Caco-2 (cell line): ENCODE measurements at regions of chr7 and their contacts with region 1.

Region 1: GRCh38 chr7:46352004-46352954 is 431.2 kb upstream of the IGFBP3 start:
- DNase-seq: peak; percentile 48 to 56
- H3K4me3 ChIP-seq: no peak overlapping the region
- H3K4me3 Mint-ChIP-seq: no peak overlapping the region
- H3K27ac Mint-ChIP-seq: no peak overlapping the region
- H3K4me1 ChIP-seq: no peaks in the 10 kb centered on the region
- H3K4me1 Mint-ChIP-seq: no peaks in the 10 kb centered on the region
- H3K27me3 ChIP-seq: no peaks in the 10 kb centered on the region
- H3K27me3 Mint-ChIP-seq: peaks cover 6% of the 10 kb centered on the region
- CTCF ChIP-seq: peak; percentile 68 to 73

Region 2: DNA sequence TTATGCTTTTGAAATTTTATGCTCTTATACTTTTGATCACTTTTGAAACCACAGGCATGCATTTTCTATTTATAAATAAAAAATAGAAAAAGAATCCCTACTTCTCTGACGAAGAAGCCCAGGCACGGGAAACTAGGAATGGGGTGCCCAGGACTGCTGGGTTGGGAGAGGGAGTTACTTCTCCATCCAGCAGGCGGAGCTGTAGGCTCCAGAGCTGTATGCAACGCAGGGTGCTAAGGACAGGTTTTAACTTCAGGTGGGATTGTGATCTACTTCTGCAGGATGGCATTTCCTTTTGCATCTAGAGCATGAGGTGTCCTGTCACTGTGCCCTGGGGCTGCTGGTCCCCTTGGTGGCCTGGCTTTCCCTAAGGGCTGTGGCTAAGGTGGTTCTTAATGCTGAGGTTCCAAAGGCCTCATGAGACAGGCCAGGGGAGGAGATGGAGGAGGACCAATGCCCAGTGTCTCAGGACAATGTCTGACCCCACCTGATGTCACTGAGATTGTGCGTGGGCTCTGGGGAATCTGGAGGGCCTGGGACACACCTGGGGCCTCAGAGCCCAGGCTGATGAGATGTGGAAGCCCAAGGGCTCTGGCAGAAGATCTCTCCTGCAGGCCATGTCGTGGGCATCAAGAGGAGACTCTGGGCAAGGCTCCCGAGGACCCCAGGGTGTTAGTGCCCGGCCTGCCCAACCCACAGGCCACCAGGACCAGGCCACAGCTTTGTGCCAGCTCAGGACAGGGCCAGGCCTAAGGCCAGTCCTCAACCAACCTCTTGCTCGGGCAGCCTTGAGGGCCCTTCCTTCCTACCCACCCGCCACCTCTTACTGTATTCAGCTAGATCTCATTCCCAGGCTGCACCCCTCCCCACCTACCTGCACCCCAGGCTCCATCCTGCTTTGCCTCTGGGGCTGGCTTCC is 479.9 kb before region 1 on chr7:
- CTCF ChIA-PET with region 1: no interaction called
- POLR2A ChIA-PET with region 1: no interaction called
- intact Hi-C with region 1: loop called (anchors 2 kb)
- DNase-seq: peak in 1 of 2 experiments; percentile 34
- H3K4me3 ChIP-seq: no peak overlapping the region
- H3K4me3 Mint-ChIP-seq: no peak overlapping the region
- H3K27ac Mint-ChIP-seq: no peak overlapping the region
- H3K4me1 ChIP-seq: no peaks in the 10 kb centered on the region
- H3K4me1 Mint-ChIP-seq: no peaks in the 10 kb centered on the region
- H3K27me3 ChIP-seq: no peaks in the 10 kb centered on the region
- H3K27me3 Mint-ChIP-seq: peaks cover 6% of the 10 kb centered on the region
- CTCF ChIP-seq: peak; percentile 41 to 72

Region 3: GRCh38 chr7:45917658-45918057 is 434.6 kb before region 1 on chr7:
- CTCF ChIA-PET with region 1: interaction called, 3 read pairs
- POLR2A ChIA-PET with region 1: no interaction called
- intact Hi-C with region 1: loop called (anchors 1 kb)
- DNase-seq: peak; percentile 62 to 84
- H3K4me3 ChIP-seq: no peak overlapping the region
- H3K4me3 Mint-ChIP-seq: no peak overlapping the region
- H3K27ac Mint-ChIP-seq: no peak overlapping the region
- H3K4me1 ChIP-seq: peaks cover 5% of the 10 kb centered on the region; the same call in 1 of the 2 replicates
- H3K4me1 Mint-ChIP-seq: no peaks in the 10 kb centered on the region
- H3K27me3 ChIP-seq: no peaks in the 10 kb centered on the region; the same call in none of the 2 replicates
- H3K27me3 Mint-ChIP-seq: peaks cover 23% of the 10 kb centered on the region
- CTCF ChIP-seq: peak; percentile 96

Region 4: DNA sequence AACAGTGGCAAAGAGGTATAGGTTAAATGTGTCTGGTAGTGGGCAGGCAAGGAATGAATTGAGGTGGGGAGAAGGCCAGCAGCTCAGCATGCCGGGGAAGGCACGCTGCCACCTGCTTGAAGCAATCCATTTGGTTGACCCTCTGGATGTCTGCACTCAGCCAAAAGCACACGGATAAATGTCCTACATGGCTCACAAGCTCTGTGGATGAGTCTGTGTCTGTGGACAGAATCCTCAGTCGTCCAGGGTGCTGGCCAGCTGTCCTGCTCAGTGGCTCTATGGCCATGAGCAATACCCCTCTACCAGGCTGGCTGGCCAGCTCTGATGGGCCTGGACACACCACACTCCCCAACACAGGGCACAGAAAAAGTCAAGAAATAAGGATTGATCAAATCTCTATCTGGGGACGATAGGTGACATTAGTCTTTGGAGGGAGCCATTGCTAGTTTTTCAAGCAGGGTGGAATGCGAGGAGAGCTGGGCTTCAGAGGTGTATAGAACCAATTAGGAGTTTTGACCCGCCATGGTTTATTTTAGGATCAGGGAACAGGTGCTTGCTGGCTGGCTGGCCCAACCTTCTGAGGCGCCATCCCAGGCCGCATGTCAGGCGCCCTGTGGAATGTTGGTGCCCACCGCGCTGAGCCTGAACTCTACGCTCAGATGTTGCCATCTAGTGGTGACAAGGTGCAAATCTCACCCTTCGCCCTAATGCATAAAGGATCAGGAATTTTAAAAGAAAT is 736.2 kb after region 1 on chr7:
- CTCF ChIA-PET with region 1: no interaction called
- POLR2A ChIA-PET with region 1: no interaction called
- intact Hi-C with region 1: loop called (anchors 2 kb)
- DNase-seq: peak; percentile 46 to 61
- H3K4me3 ChIP-seq: no peak overlapping the region
- H3K4me3 Mint-ChIP-seq: no peak overlapping the region
- H3K27ac Mint-ChIP-seq: no peak overlapping the region
- H3K4me1 ChIP-seq: no peaks in the 10 kb centered on the region
- H3K4me1 Mint-ChIP-seq: no peaks in the 10 kb centered on the region
- H3K27me3 ChIP-seq: no peaks in the 10 kb centered on the region
- H3K27me3 Mint-ChIP-seq: no peaks in the 10 kb centered on the region
- CTCF ChIP-seq: peak; percentile 81 to 82